Endothelial cell of umbilical vein (primary cell): ENCODE measurements at regions of chr20 and their contacts with region 1.

Region 1: DNA sequence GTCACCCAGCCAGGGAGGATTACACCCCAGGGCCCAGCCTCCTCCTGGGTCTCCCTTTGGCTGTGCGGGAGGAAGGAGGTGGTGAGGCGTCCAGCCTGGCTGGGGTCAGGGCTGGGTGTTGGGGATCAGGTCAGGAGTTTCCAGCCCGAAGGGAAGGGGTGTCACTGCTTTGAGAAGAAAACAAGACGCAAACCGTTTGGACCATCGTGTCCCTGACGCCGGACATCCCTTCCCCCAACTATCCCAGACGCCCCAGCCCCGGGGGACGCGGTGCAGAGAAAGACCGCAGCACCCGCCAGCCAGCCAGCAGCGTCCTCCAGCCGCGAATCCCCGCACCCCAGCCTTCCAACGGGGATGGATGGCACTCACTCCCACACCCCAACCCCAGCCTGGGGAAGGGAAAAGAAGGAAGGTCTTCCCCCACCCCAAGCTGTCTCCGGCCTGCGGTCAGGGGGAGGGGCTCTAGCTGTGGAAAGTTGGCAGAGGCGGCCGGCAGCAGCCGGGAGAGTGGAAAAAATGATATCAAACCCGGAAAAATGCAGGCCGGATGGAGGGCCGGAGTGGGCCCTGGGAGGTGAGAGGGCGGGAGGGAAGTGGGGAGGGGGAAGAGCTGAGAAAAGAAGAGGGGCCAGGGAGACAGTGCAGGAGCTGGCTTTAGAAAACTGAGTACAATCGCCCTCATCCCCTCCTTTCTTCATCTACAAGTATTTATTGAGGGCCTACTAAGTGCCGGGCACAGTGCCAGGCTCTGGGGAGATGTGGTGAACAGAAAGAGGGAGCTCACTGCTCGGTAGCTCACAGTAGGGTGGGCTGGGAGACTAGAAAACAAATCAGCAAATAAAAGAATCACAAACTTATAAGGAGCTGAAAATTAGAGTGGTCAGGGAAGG is 10.6 kb downstream of the REM1 start:
- DNase-seq: peak; percentile 70
- H3K4me3 ChIP-seq: peak overlapping the region in 1 of 3 experiments; percentile 1
- H3K27ac ChIP-seq: no peak overlapping the region
- H3K4me1 ChIP-seq: no peaks in the 10 kb centered on the region
- H3K27me3 ChIP-seq: peaks cover 0 to 11% of the 10 kb centered on the region in 2 experiments
- CTCF ChIP-seq: no peak
- POLR2A ChIP-seq: no peak

Region 2: DNA sequence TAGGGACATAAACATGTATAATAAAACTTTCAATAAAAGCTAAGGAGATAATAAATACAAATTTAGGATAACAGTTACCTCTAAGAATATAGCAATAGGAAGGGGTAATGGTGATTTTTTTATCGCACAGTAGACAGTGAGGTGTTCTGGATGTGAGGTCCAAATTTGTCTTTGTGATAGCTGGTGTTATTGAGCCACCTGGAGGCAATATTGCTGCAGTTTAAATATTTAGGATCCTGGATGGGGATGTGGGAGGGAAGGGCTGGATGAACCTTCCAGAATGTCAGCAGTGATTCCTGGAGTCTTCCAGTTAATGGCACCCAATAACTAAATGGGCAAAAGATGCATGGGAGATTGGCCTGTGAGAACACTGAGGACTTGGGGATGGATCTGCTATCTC is 31.3 kb before region 1 on chr20:
- CTCF ChIA-PET with region 1: interaction called, 16 read pairs
- POLR2A ChIA-PET with region 1: no interaction called
- dilution Hi-C with region 1: no loop called
- intact Hi-C with region 1: no loop called
- DNase-seq: no peak
- H3K4me3 ChIP-seq: no peak overlapping the region
- H3K27ac ChIP-seq: no peak overlapping the region
- H3K4me1 ChIP-seq: no peaks in the 10 kb centered on the region
- H3K27me3 ChIP-seq: no peaks in the 10 kb centered on the region
- CTCF ChIP-seq: no peak
- POLR2A ChIP-seq: no peak

Region 3: DNA sequence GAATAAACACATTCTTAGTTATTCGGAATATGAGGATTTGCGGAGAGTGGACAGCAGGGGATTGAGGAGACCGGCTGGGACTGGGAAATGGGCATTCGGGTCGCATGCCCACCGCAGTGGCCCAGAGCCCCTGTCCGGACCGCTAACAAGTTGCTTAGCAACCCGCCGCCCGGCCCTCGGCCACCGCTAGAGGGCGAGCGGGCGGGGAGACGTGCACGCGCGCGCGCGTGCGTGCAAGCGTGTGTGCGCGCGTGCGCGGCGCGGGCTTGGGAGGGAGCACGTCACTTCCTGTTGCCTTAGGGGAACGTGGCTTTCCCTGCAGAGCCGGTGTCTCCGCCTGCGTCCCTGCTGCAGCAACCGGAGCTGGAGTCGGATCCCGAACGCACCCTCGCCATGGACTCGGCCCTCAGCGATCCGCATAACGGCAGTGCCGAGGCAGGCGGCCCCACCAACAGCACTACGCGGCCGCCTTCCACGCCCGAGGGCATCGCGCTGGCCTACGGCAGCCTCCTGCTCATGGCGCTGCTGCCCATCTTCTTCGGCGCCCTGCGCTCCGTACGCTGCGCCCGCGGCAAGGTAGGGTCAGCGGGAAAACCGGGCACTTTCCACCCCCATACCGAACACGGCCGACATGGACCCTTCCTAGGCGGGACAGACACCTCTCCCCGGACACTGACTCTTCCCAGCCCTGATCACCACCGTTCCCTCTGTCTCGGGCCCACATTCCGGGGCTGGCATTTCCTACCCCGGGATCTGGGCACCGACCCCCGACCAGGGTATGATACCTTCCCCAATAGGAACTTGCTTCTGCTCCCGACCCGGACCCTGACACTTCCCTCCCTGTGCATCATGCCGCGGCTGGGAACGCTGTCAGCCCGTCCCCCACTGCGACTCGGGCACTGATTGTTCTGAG is 28.7 kb after region 1 on chr20 and contains the start of gene HM13:
- CTCF ChIA-PET with region 1: no interaction called
- POLR2A ChIA-PET with region 1: no interaction called
- dilution Hi-C with region 1: no loop called
- intact Hi-C with region 1: loop called (anchors 2 kb)
- DNase-seq: peak; percentile 94
- H3K4me3 ChIP-seq: peak within 1 kb of the TSS; percentile 7 to 84 (median 70)
- H3K27ac ChIP-seq: peak within 1 kb of the TSS; percentile 38
- H3K4me1 ChIP-seq: peaks cover 25% of the 10 kb centered on the region
- H3K27me3 ChIP-seq: no peaks in the 10 kb centered on the region
- CTCF ChIP-seq: peak; percentile 94 to 99
- POLR2A ChIP-seq: peak; percentile 95
- total RNA-seq, gene HM13: 188 and 211 TPM in 2 replicates

Region 4: DNA sequence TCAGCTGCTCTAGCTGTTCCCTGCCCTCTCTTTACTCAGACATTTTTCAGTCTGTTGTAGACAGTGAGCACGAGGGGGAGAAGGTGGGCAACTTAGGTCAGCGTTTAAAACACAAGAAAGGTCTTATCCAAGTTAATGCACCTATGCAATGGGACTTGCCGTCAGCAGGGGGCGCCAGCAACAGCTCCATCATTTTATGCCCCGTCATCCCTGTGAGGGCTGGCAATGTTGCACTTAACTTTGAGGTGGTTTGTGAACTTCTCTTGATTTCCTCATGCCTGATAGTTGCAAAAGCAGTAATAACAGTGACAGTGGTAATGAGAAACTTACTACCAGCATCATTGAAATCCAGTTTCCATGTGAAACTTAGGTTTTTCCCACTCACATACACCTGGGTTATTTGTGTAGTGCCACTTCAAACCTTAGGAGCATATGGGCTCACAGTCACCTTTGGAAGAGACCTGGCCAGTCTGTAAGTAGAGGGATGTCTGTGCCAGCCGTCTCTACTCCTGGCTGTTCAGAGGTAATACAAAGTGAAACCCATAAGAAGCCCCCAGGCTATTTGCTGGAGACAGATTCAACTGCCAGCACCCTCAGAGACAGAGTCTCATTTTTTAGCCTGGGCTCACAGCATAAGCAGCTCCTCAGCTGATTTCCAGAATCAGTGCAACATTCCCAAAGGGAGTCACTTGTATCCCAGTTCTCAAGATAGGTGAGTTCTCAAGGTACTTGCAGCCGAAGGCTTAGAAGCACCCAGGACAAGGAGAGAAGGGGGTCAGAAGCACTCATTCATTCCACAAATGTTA is 74.6 kb after region 1 on chr20:
- CTCF ChIA-PET with region 1: no interaction called
- POLR2A ChIA-PET with region 1: no interaction called
- dilution Hi-C with region 1: no loop called
- intact Hi-C with region 1: no loop called
- DNase-seq: peak; percentile 79
- H3K4me3 ChIP-seq: no peak overlapping the region
- H3K27ac ChIP-seq: peak overlapping the region; percentile 100
- H3K4me1 ChIP-seq: peaks cover 35% of the 10 kb centered on the region
- H3K27me3 ChIP-seq: no peaks in the 10 kb centered on the region
- CTCF ChIP-seq: peak; percentile 90 to 97
- POLR2A ChIP-seq: peak; percentile 41